BJ (cell line): ENCODE measurements at regions of chr3 and their contacts with region 1.

Region 1: GRCh38 chr3:189961525-189962161 is 159.1 kb downstream of the P3H2 start:
- DNase-seq: no peak
- H3K4me3 ChIP-seq: no peak overlapping the region
- H3K27me3 ChIP-seq: no peaks in the 10 kb centered on the region
- CTCF ChIP-seq: peak; percentile 88

Region 2: GRCh38 chr3:189978753-189979152 is 17.1 kb after region 1 on chr3:
- CTCF ChIA-PET with region 1: interaction called, 13 read pairs
- POLR2A ChIA-PET with region 1: no interaction called
- DNase-seq: no peak
- H3K4me3 ChIP-seq: no peak overlapping the region
- H3K27me3 ChIP-seq: no peaks in the 10 kb centered on the region
- CTCF ChIP-seq: no peak

Region 3: DNA sequence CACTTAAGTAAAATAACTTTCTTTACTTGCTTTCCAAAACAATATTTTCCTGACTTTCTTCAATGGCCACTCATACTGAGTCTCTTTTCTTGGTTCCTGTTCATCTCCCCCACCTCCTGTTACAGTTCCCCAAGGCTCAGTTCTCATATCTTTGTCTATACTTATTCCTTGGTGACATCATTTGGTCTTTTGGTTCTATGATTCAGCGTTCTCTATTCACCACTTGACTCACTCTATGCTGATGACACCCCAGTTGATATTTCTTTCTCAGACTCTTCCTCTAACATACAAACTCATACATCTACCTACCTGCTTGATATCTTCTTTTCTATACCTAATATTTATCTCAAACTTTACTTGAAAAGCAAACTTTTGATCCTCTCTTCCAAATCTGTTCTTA is 244.1 kb after region 1 on chr3:
- CTCF ChIA-PET with region 1: interaction called, 16 read pairs
- POLR2A ChIA-PET with region 1: no interaction called
- DNase-seq: no peak
- H3K4me3 ChIP-seq: no peak overlapping the region
- H3K27me3 ChIP-seq: no peaks in the 10 kb centered on the region
- CTCF ChIP-seq: no peak

Region 4: DNA sequence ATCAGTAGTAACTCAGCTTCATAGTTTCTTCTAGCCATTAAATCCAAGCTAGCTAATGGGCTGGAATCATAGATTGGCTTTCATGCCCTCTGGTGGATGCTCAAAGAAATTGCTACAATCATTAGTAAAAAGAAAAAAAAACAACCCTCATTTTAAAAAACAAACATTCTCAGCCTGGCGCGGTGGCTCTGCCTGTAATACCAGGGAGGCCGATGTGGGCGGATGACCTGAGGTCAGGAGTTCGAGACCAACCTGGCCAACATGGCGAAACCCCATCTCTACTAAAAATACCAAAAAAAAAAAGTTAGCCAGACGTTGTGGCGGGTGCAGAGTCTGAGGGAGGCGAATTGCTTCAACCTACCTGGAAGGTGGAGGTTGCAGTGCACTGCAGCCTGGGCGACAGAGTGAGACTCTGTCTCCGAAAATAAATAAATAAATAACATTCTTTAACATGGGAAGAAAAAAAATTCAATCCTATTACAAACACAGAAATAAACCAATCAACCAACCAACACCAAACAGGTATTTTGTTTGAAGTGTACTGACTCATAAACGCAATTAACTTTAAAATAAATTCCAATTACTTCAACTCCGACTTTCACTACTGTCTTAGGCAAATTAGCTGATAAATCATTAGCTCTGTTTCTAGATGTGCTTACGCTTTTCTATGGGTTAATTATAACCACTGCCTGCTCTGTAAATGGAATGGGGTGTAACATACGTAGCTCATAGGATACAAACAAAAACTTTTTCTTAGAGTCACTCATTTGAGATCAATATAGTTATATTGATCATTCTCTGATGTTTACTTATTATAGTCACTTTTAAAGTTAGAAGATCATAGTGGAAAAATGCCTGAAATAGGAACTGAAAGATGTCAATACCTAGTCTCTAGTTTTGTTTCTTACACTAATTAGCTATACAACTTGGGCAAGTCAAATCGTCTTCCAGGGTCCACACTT is 463.1 kb after region 1 on chr3:
- CTCF ChIA-PET with region 1: interaction called, 36 read pairs
- POLR2A ChIA-PET with region 1: no interaction called
- DNase-seq: no peak
- H3K4me3 ChIP-seq: no peak overlapping the region
- H3K27me3 ChIP-seq: no peaks in the 10 kb centered on the region
- CTCF ChIP-seq: peak; percentile 67

Region 5: DNA sequence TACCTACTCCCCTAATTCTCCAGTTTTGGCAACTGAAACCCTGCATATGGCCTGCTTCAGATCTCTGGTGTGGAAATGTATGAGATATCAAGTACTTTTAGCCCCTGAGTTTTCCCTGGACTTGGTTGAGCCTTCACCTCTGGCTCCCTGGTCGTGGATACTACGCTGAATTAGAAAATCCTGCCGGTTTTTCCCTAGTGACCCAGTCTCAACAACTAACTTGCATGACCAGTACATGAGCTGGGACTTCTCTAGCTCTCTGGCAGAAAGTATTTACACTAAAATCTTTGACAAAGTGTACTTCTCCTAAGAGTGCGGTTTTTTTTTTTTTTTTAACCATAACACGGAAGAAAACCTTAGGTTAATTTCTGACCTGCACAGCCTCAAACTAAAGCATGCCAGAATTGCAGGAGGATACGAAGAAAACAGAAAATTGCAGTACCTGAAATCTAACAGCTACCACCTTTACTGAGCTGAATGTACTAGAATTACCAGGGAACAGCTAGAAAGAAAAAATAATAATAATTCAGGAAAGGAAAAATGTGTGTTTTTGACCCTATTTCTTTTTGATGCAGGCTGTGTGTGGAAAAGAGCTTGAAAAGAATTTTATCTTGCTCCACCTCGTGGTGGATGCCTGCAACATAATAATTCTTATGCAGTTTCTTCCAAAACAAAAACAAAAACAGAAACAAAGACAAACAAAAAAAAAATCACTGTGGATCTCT is 735.3 kb after region 1 on chr3:
- CTCF ChIA-PET with region 1: interaction called, 20 read pairs
- POLR2A ChIA-PET with region 1: no interaction called
- DNase-seq: no peak
- H3K4me3 ChIP-seq: no peak overlapping the region
- H3K27me3 ChIP-seq: no peaks in the 10 kb centered on the region; the same call in 1 of the 2 replicates
- CTCF ChIP-seq: peak; percentile 57